Sigmoid colon (tissue), 7 donors: ENCODE measurements at regions of chr22 and their contacts with region 1.

Region 1: GRCh38 chr22:21666786-21667185 is 974 bp downstream of the PPIL2 start:
- DNase-seq: no peak
- H3K4me3 ChIP-seq: peak overlapping the region; percentile 76 to 89 (median 82)
- H3K27ac ChIP-seq: peak overlapping the region; percentile 90 to 95 (median 92)
- H3K4me1 ChIP-seq: peaks cover 0 to 15% (median 12%) of the 10 kb centered on the region in 4 donors
- H3K27me3 ChIP-seq: no peaks in the 10 kb centered on the region
- CTCF ChIP-seq: no peak
- EP300 ChIP-seq: no peak
- POLR2A ChIP-seq: no peak

Region 2: DNA sequence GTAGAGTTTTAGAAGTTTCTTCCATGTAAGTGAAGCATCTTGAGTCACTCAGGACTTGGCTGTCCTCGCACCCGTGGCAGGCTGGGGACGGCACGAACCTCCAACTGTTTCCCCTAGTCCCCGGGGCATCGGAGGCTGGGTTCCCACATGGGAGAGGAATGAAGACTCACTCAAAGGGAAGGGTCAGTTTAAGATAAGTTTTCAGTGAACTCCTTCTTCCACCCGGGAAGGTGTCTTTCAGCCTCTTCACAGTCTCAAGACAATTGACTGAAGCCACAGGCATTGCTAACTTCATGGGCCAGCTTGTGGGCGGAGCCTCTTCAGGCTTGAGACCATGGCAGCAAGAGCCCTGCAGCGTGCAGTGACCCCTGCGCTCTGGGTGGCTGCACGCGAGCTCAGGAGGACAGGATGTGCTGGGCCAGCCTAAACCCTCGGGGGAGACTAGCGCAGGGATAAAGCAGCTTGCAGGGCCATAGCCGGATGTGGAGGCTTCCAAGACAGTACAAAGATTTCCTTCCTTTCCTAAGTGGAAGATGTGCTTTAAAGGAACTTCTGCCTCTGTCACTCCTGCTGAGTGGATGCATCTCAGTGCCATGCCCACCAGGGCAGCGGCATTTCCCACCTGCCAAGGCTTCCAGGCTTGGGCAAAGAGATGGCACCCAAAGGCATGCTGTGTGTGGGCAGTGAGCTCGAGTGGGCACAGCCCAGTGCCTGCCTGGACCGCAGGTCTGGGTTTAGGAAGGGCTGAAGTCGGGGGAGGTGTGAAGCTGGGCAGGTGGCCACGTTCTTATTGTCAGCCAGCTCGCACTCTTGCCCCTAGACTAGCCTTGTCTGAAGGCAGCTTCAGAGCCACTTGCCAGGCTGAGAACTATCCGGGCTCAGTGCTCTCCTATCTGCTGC is 31.9 kb after region 1 on chr22:
- intact Hi-C with region 1: no loop called
- DNase-seq: no peak
- H3K4me3 ChIP-seq: no peak overlapping the region
- H3K27ac ChIP-seq: peak overlapping the region; percentile 55 to 85 (median 68)
- H3K4me1 ChIP-seq: peaks cover 0 to 30% (median 24%) of the 10 kb centered on the region in 4 donors
- H3K27me3 ChIP-seq: no peaks in the 10 kb centered on the region
- CTCF ChIP-seq: no peak
- EP300 ChIP-seq: no peak
- POLR2A ChIP-seq: no peak

Region 3: GRCh38 chr22:21735200-21736076 is 68.7 kb after region 1 on chr22 and contains the start of gene YPEL1:
- intact Hi-C with region 1: loop called (anchors 1 kb)
- DNase-seq: peak; percentile 98
- H3K4me3 ChIP-seq: peak within 1 kb of the TSS; percentile 38 to 78 (median 60)
- H3K27ac ChIP-seq: peak within 1 kb of the TSS; percentile 79 to 86 (median 83)
- H3K4me1 ChIP-seq: peaks cover 0 to 19% (median 12%) of the 10 kb centered on the region in 4 donors
- H3K27me3 ChIP-seq: no peaks in the 10 kb centered on the region
- CTCF ChIP-seq: no peak
- EP300 ChIP-seq: no peak
- POLR2A ChIP-seq: peak; percentile 12
- total RNA-seq, gene YPEL1: 5.9 to 9.6 (median 7.9) TPM

Region 4: DNA sequence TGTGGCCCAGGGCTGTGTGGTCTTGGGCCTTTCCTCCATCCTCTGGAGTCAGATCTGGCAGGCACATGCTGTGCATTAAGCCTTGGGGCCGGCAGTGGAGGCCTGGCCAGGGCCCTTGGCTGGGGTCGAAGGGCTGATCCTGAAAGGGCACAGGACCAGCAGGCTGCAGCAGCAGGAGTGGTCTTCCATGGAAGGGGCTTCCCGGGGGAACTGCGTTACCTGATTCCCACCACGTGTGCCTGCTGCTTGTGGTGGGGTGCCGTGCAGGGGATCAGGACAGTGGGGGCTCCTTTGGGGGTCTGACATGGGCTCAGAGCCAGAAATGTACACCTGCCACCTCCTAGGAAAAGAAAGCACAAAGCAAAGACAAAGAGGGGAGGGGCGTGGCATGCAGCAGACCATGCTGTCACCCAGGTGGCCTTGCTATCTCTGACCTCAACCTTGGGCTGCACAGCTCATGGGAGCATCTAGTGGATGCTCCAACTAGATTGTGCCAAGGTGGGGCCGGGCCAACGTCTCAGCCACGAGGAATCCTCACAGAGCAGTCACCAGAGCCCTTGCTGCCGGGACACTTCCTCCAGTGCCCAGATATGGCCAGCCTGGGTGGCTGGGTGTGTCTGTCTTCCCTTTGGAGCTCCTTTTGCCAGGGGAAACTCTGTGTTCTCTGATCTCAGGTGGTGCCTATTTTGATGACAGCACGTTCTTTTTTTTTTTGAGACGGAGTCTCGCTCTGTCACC is 86.8 kb after region 1 on chr22:
- intact Hi-C with region 1: no loop called
- DNase-seq: no peak
- H3K4me3 ChIP-seq: no peak overlapping the region
- H3K27ac ChIP-seq: no peak overlapping the region
- H3K4me1 ChIP-seq: peaks cover 0 to 14% (median 4%) of the 10 kb centered on the region in 4 donors
- H3K27me3 ChIP-seq: no peaks in the 10 kb centered on the region
- CTCF ChIP-seq: no peak
- EP300 ChIP-seq: no peak
- POLR2A ChIP-seq: no peak